GM13976 (cell line): ENCODE measurements at regions of chr3 and their contacts with region 1.

Region 1: DNA sequence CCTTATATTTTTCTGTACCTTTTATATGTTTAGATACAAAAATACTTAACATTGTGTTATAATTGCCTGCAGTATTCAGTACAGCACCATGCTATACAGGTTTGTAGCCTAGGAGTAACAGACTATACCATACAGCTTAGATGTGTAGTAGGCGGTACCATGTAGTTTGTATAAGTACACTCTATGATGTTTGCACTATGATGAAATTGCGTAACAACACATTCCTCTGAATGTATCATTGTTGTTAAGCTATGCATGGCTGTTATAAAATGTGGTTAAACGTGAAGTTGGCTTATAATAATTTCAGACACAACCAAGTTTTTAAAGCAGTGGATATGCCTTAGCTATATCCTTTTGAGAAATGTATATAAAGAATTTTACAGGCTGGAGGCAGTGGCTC is 328.3 kb downstream of the PLCL2 start:
- DNase-seq: no peak
- CTCF ChIP-seq: no peak

Region 2: GRCh38 chr3:16290007-16290826 is 922.9 kb before region 1 on chr3:
- in situ Hi-C with region 1: loop called (anchors 25 kb)
- DNase-seq: peak; percentile 24
- CTCF ChIP-seq: peak; percentile 72